ENCODE measurements at regions of chr10 and their contacts with region 1.

Region 1: DNA sequence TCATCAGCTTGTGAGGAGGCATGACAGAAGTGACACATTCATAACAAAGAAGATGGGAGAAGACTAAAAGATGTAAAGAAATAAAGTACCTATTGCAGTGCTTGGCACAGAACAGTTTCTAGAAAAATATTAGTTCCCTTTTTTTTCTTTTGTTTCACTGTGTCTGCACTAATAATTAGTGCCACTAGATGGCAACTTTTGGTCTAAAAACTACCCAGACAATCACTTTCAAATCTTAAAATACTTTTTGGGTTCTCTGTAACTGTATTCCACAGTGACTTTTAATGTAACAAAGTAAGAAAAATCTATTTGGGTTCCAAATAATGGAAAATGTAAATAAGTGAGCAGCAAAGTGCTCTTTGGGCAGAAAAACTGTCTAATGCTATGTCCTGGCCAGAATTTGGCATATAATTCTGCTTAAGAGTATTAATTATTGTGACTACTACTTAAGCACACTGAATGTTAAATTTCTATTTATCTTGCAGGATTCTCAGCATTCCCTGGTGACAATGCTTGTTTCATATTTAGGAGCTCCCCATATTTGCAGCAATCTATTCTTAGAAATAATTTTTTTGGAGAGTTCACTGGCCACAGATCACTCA is 134.8 kb upstream of the KIF5B start:
- DNase-seq: no peak

Region 2: DNA sequence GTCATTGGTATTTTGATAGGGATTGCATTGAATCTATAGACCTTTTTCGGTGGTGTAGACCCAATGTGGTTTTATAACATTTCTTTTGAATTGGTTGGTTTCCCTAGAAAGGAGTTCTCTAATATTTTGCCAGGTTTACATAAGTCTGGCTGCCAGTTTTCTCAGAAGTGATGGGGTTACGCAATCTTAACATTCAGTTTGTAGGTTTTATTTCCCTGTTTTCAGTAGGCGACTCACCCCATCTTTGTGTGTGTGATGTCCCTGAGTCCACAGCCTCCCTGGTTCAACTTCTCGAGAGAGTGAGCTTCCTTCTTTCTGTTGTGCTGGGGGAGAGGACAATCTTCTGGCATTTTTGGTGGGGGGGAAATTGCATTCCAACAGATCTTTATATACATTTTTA is 125.1 kb before region 1 on chr10:
- intact Hi-C with region 1: loop called (anchors 10 kb)
- DNase-seq: no peak

Region 3: DNA sequence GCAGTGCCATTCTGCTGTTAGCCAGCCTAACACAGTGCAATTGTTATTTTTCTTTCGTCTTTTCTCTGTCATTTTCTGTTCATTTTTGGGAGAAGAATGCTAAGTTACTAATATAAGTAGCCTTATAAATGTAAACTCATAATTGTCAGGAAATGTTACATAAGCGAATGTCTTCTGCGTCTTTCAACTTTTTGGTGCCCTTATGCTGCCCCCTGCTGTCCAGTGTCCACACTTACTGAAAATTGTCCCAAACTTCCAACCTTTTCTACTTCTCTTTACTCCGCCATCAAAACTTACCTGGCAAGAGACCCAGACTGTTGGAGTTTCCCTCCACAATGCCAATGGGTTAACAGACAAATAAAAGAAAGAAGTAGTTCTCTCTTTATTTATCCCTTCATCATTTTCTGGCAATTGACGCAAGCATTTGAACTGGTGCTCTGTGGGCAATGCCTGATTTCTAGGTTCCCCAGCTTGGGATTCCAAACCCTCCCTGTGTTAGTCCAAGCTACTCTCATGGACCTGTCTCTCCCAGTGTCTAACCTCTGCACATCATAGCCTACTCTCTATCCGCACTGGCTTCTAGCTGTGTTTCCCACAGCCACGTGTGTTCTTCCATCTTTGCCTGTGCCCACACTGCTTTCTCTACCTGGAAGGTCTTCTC is 176.9 kb after region 1 on chr10:
- intact Hi-C with region 1: loop called (anchors 5 kb)
- DNase-seq: peak; percentile 80

Measured in cardiac septum (tissue), 1 donor.